ENCODE measurements at regions of chr1 and their contacts with region 1.

Region 1: GRCh38 chr1:23691499-23692307 is at the start of gene RPL11:
- DNase-seq: peak; percentile 84
- ATAC-seq: peak; percentile 94
- H3K4me3 ChIP-seq: peak within 1 kb of the TSS; percentile 87
- H3K27ac ChIP-seq: peak within 1 kb of the TSS; percentile 95
- H3K4me1 ChIP-seq: peaks cover 8% of the 10 kb centered on the region
- H3K27me3 ChIP-seq: no peaks in the 10 kb centered on the region
- CTCF ChIP-seq: peak; percentile 81 to 85 (median 84)
- EP300 ChIP-seq: 0 out of 4 replicates have a peak, but pooled peaks of 1 of the 2 experiments have one; percentile 17
- POLR2A ChIP-seq: peak; percentile 98
- RAD21 ChIP-seq: peak; percentile 56
- polyA plus RNA-seq, gene RPL11: 2,510 to 2,532 TPM

Region 2: DNA sequence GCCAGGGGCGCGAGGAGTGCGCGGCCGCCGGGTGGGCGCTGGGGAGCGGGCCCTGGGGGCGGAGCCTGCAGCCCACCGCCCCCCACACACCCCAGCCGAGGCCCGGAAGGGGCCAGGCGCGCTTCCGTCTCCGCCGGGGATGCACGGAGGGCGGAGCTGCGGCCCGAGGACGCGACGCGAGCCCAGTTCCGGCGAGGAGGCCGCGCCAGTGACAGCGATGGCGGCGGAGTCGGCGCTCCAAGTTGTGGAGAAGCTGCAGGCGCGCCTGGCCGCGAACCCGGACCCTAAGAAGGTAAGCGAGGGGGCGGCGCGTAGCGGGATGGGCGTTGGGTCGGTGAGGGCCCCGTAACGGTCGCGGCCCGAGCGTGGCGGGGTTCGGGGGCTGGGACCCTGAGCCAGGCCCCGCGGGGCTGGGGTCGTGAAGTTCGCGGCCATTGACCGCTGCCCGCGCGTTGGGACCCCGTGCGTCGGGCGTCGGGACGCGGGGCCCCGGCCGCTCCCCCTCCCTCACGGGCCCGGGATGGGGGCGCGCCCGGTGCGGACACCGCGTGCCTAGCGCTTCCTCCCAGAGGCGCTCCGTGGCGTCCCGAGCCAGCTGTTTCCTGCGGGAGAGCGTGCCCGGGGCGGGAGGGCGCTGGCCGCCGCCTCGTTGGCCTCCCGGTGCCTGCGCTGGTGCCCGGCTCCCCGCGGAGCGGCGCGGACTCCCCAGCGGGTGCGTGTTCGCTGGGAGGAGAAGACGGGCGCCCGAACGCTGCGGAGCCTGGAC is 51.8 kb after region 1 on chr1 and contains the start of gene ELOA:
- CTCF ChIA-PET with region 1: interaction called, 155 read pairs
- POLR2A ChIA-PET with region 1: interaction called, 8 read pairs
- RAD21 ChIA-PET with region 1: interaction called, 48 read pairs
- SMC1A ChIA-PET with region 1: interaction called, 137 read pairs
- in situ Hi-C with region 1: loop called (anchors 5 kb)
- intact Hi-C with region 1: no loop called
- DNase-seq: no peak
- ATAC-seq: peak; percentile 92
- H3K4me3 ChIP-seq: peak within 1 kb of the TSS; percentile 84
- H3K27ac ChIP-seq: peak within 1 kb of the TSS; percentile 73
- H3K4me1 ChIP-seq: peaks cover 12% of the 10 kb centered on the region
- H3K27me3 ChIP-seq: no peaks in the 10 kb centered on the region
- CTCF ChIP-seq: no peak
- EP300 ChIP-seq: no peak
- POLR2A ChIP-seq: peak; percentile 99
- RAD21 ChIP-seq: no peak
- polyA plus RNA-seq, gene ELOA: 20.1 to 24.8 TPM

Region 3: GRCh38 chr1:23777979-23778814 is 86.5 kb after region 1 on chr1 and contains the start of gene PITHD1:
- CTCF ChIA-PET with region 1: no interaction called
- POLR2A ChIA-PET with region 1: interaction called, 4 read pairs
- RAD21 ChIA-PET with region 1: interaction called, 11 read pairs
- SMC1A ChIA-PET with region 1: interaction called, 3 read pairs
- in situ Hi-C with region 1: no loop called
- intact Hi-C with region 1: no loop called
- DNase-seq: peak; percentile 45
- ATAC-seq: peak; percentile 96
- H3K4me3 ChIP-seq: peak within 1 kb of the TSS; percentile 99
- H3K27ac ChIP-seq: peak within 1 kb of the TSS; percentile 82
- H3K4me1 ChIP-seq: peaks cover 10% of the 10 kb centered on the region; the same call in 1 of the 2 replicates
- H3K27me3 ChIP-seq: no peaks in the 10 kb centered on the region
- CTCF ChIP-seq: no peak
- EP300 ChIP-seq: no peak
- POLR2A ChIP-seq: peak; percentile 98
- RAD21 ChIP-seq: no peak
- polyA plus RNA-seq, gene PITHD1: 23.7 to 43.3 TPM

Region 4: GRCh38 chr1:23838401-23838866 is 146.7 kb after region 1 on chr1:
- CTCF ChIA-PET with region 1: no interaction called
- POLR2A ChIA-PET with region 1: no interaction called
- RAD21 ChIA-PET with region 1: no interaction called
- SMC1A ChIA-PET with region 1: no interaction called
- in situ Hi-C with region 1: no loop called
- intact Hi-C with region 1: no loop called
- DNase-seq: peak; percentile 28
- ATAC-seq: peak; percentile 100
- H3K4me3 ChIP-seq: peak overlapping the region; percentile 61; the same call in 1 of the 2 replicates
- H3K27ac ChIP-seq: no peak overlapping the region
- H3K4me1 ChIP-seq: no peaks in the 10 kb centered on the region
- H3K27me3 ChIP-seq: no peaks in the 10 kb centered on the region
- CTCF ChIP-seq: 0 out of 6 replicates have a peak, but pooled peaks of 1 of the 3 experiments have one; percentile 1
- EP300 ChIP-seq: no peak
- POLR2A ChIP-seq: 0 out of 2 replicates have a peak, but pooled peaks have one; percentile 38
- RAD21 ChIP-seq: no peak

Measured in GM12878 (cell line).